Activated CD4-positive, alpha-beta memory T cell treated with anti-CD3 and anti-CD28 coated beads for 36 hours (primary cell): ENCODE measurements at regions of chr9 and their contacts with region 1.

Region 1: DNA sequence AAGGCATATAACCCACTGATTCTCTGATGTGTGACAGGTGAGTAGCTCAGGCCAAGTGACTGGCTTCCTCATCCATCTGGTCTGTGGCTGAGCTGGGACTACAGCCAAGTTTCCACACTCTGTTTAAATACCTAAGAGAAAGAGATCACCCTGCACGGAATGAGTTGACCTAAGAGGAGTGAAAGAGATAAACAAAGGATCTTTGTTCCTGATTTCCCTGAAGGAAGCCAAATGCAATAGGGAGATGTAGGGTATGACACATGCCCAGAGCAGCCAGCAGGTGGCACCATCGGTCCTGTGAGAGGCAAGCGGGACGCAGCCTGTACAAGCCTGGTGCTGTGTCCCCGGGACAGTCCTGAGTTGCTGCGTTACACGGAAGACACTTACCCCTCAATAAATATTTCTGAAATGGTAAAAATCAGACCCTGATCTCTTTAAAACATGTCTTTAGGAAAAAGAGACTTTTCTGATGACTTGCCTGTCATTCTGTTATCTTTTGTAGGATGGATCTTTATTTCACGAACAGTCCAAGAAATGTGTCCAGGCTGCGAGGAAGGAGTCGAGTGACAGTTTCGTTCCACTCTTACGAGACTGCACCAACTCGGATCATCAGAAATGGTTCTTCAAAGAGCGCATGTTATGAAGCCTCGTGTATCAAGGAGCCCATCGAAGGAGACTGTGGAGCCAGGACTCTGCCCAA is 41.1 kb downstream of the GALNT12 start:
- DNase-seq: peak; percentile 86
- H3K4me3 Mint-ChIP-seq: no peak overlapping the region
- H3K27ac Mint-ChIP-seq: no peak overlapping the region
- H3K4me1 Mint-ChIP-seq: peaks cover 10% of the 10 kb centered on the region
- H3K27me3 Mint-ChIP-seq: no peaks in the 10 kb centered on the region

Region 2: DNA sequence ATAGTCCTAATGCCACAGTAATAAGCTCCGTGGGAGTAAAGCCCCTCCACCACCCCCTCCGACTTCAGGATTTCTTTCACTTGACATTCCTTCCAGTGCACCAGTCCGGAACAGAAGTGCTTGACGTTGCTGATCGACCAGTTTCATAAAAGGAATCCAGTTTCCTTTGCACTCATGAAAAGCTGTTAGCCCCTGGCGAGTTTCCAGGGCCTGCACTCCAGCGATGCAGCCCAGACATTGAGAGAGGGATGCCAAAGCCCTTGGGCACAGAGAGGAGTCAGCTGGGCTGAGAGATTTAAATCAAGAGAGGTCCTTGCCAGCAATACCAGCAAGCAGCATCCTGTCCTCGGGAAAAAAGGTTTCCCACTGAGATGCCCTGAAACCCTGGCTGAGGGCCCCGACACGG is 310.0 kb before region 1 on chr9:
- CTCF ChIA-PET with region 1: no interaction called
- POLR2A ChIA-PET with region 1: no interaction called
- intact Hi-C with region 1: no loop called
- DNase-seq: no peak
- H3K4me3 Mint-ChIP-seq: no peak overlapping the region
- H3K27ac Mint-ChIP-seq: no peak overlapping the region
- H3K4me1 Mint-ChIP-seq: no peaks in the 10 kb centered on the region
- H3K27me3 Mint-ChIP-seq: peaks cover 3% of the 10 kb centered on the region

Region 3: GRCh38 chr9:98807070-98807810 is 41.4 kb before region 1 on chr9 and contains the start of gene GALNT12:
- CTCF ChIA-PET with region 1: interaction called, 17 read pairs
- POLR2A ChIA-PET with region 1: no interaction called
- intact Hi-C with region 1: no loop called
- DNase-seq: peak; percentile 64
- H3K4me3 Mint-ChIP-seq: peak within 1 kb of the TSS; percentile 76
- H3K27ac Mint-ChIP-seq: no peak within 1 kb of the TSS
- H3K4me1 Mint-ChIP-seq: peaks cover 35% of the 10 kb centered on the region
- H3K27me3 Mint-ChIP-seq: peaks cover 4% of the 10 kb centered on the region
- total RNA-seq, gene GALNT12: 6.3 to 7.9 TPM

Region 4: GRCh38 chr9:98838155-98838867 is 10.3 kb before region 1 on chr9:
- CTCF ChIA-PET with region 1: interaction called, 29 read pairs
- POLR2A ChIA-PET with region 1: no interaction called
- intact Hi-C with region 1: no loop called
- DNase-seq: no peak
- H3K4me3 Mint-ChIP-seq: no peak overlapping the region
- H3K27ac Mint-ChIP-seq: no peak overlapping the region
- H3K4me1 Mint-ChIP-seq: no peaks in the 10 kb centered on the region
- H3K27me3 Mint-ChIP-seq: no peaks in the 10 kb centered on the region

Region 5: GRCh38 chr9:98867429-98868168 is 19.0 kb after region 1 on chr9:
- CTCF ChIA-PET with region 1: interaction called, 16 read pairs
- POLR2A ChIA-PET with region 1: interaction called, 3 read pairs
- intact Hi-C with region 1: no loop called
- DNase-seq: peak; percentile 11
- H3K4me3 Mint-ChIP-seq: no peak overlapping the region
- H3K27ac Mint-ChIP-seq: no peak overlapping the region
- H3K4me1 Mint-ChIP-seq: no peaks in the 10 kb centered on the region
- H3K27me3 Mint-ChIP-seq: peaks cover 8% of the 10 kb centered on the region

Region 6: DNA sequence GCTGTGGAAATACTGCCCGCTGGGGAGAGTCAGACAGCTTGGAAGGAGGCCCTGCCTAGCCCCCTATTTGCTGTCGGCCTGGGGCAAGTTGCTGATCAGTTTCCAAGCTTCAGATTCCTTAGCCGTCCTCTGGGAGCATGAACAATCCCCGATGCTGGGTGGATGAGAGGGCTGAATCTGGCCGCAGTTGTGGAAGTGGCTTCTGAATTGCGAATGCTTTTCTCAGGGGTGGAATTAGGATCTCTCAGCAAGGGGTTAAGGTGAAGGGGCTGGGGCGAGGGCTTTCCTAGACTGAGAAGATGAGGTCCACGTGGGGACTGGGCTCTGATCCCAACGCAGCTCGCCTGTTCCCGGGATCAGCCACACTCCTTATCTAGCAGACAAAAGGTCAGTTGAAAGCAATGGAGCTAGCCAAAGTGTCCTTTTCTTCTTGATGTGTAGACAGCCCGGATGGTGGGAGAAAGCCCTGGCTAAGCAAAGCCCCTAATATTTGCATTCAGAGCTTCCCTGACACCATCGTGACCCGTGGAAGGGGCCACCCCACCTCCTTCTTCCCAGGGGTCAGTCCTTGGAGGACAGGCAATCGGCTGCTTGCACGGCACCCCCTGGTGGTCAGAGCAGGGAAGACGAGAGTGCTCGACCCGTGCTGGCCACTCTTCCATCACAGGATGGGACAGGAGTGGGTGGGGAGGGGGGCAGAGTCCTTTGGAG is 150.0 kb after region 1 on chr9:
- CTCF ChIA-PET with region 1: interaction called, 65 read pairs
- POLR2A ChIA-PET with region 1: no interaction called
- intact Hi-C with region 1: loop called (anchors 1 kb)
- DNase-seq: peak; percentile 73
- H3K4me3 Mint-ChIP-seq: no peak overlapping the region
- H3K27ac Mint-ChIP-seq: no peak overlapping the region
- H3K4me1 Mint-ChIP-seq: peaks cover 23% of the 10 kb centered on the region
- H3K27me3 Mint-ChIP-seq: peaks cover 7% of the 10 kb centered on the region

Region 7: DNA sequence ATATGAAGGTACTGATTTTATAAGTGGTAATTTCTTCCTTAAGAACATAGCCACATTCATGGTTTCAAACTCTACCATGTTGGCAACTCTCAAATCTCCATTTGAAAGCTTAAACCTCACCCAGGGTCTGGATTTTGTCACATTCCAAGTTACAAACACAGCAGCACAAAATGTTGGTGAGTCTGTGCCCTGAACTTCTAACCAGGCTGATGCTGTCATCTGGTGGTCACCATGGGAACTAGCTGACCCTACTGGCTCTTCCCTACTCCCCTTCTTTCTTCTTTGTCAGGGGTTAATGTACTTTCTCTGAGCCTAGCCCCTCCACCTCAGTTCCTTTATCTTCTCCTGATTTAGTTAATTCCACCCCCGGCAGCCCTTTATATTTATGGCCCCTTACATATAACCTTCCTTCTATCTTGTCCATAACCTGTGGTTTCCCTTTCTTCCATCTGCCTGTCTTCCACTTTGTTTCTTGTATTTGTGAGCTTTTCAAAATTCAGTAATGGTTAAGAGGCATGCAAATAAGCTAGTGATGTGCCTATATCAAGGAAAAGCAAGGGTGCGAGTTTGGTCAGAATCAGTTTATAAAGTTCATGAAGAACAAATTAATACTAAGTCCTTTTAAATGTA is 292.2 kb after region 1 on chr9:
- CTCF ChIA-PET with region 1: interaction called, 57 read pairs
- POLR2A ChIA-PET with region 1: no interaction called
- intact Hi-C with region 1: loop called (anchors 1 kb)
- DNase-seq: peak; percentile 51
- H3K4me3 Mint-ChIP-seq: no peak overlapping the region
- H3K27ac Mint-ChIP-seq: no peak overlapping the region
- H3K4me1 Mint-ChIP-seq: peaks cover 25% of the 10 kb centered on the region
- H3K27me3 Mint-ChIP-seq: no peaks in the 10 kb centered on the region